ENCODE measurements at regions of chr10 and their contacts with region 1.

Region 1: DNA sequence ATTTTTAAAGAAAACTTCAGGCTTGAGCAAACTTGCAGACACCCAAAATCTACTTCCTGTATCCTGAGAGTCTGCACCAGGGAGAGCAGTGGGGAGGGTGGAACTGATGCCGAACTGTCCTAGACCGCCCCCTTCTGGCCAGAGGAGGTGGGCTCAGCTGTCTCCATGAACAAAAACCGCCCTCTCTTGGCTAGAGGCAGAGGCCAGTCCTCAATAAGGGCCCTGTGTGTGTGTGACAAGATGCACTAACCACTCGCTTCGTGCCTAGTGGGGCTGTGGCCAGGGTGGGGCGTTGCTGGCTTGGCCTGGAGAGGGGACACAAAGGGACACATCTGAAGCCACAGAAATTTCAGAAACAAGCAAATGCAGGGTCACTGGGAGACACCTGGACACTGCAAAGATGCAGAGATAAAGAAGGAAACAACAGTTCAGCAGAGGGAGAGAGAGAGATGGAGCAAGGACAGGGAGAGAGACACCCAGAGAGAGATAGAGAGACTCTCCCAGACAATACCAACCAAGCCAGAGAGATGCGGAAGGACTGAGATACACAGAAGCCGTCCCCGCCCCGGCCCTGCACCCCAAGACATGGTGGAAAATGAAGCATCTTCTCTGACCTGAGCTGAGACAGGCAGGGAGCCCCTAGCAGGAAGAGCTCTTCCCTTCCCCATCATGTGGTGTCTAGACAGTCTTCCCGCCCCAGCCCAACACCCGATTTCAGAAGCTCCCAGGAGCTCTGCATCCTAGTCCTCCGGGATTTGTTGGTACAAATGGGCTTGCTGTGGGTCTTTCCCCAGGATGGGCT is 22.7 kb upstream of the FXYD4 start:
- DNase-seq: peak; percentile 89

Region 2: GRCh38 chr10:43160046-43160918 is 188.4 kb before region 1 on chr10:
- CTCF ChIA-PET with region 1: no interaction called
- POLR2A ChIA-PET with region 1: no interaction called
- DNase-seq: no peak

Region 3: DNA sequence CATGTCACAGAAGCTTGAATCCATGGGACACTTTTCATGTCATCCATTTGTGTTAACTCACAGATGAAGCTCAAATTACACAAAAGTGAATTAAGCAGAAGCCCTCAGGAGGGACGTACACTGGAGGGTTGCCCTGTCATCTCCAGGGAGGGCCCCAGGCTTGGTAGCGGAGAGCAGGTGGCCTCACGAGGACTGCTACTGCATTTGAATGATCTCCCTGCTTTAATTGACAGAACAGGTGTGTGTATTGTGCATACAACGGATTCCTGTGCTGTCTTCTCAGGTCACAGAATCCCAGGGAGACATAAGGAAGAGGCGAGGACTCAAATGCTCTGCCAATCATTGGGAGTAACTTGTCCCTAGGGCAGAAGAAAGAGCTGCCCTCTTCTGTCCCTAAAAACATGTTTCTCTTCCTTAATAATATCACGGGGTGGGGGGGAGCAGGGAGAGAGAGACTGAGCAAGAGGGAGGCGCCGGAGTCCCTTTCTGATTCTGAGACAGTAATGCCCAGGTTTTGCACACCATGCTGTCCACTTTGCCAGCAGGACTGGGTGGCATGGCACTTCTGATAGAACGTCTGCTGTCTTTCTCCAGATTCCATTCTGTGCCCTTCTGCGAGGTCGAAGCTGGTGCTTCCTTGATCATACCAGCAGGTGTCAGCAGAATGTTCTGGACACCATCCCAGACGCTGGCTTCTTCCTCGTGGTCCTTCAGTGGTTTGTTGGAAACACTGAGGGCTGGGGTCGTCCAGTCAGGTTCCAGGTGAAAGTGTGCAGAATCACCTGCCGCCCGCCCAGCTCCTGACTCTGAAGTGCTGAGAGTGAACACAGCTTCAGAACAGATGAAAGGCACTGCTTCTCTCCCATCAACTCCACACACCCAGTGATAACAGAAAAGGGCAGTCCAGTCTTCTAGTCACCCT is 55.7 kb before region 1 on chr10:
- CTCF ChIA-PET with region 1: interaction called, 15 read pairs
- POLR2A ChIA-PET with region 1: no interaction called
- DNase-seq: peak; percentile 68

Region 4: GRCh38 chr10:43324876-43325275 is 23.8 kb before region 1 on chr10:
- CTCF ChIA-PET with region 1: no interaction called
- POLR2A ChIA-PET with region 1: no interaction called
- DNase-seq: no peak

Region 5: DNA sequence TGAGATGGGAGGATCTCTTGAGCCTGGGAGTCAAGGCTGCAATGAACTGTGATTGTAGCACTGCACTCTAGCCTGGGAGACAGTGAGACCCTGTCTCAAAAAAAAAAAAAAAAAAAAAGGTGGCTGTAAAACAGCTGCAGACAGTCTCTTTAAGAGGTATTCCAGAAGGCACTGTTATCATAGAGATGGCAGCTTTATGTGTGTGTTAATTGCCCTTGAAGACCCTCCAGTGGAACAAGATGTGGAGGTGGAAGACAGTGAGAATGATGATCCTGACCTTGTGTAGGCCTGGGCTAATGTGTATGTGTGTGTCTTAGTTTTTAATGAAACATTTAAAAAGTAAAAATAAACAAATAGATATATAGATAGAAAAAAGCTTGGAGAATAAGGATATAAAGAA is 154.2 kb after region 1 on chr10:
- CTCF ChIA-PET with region 1: no interaction called
- POLR2A ChIA-PET with region 1: no interaction called
- DNase-seq: no peak